Right lobe of liver (tissue), 6 donors: ENCODE measurements at regions of chr16 and their contacts with region 1.

Region 1: GRCh38 chr16:4556112-4556511 is at the start of gene C16orf96:
- DNase-seq: no peak
- ATAC-seq: peak in 2 of 4 donors; percentile 28 to 71
- H3K4me3 ChIP-seq: no peak within 1 kb of the TSS
- H3K27ac ChIP-seq: no peak within 1 kb of the TSS
- H3K4me1 ChIP-seq: no peaks in the 10 kb centered on the region
- H3K27me3 ChIP-seq: no peaks in the 10 kb centered on the region
- CTCF ChIP-seq: no peak
- POLR2A ChIP-seq: no peak
- total RNA-seq, gene C16orf96: 0.06 to 0.24 (median 0.16) TPM in 5 of 6 experiments, not detected in the other

Region 2: DNA sequence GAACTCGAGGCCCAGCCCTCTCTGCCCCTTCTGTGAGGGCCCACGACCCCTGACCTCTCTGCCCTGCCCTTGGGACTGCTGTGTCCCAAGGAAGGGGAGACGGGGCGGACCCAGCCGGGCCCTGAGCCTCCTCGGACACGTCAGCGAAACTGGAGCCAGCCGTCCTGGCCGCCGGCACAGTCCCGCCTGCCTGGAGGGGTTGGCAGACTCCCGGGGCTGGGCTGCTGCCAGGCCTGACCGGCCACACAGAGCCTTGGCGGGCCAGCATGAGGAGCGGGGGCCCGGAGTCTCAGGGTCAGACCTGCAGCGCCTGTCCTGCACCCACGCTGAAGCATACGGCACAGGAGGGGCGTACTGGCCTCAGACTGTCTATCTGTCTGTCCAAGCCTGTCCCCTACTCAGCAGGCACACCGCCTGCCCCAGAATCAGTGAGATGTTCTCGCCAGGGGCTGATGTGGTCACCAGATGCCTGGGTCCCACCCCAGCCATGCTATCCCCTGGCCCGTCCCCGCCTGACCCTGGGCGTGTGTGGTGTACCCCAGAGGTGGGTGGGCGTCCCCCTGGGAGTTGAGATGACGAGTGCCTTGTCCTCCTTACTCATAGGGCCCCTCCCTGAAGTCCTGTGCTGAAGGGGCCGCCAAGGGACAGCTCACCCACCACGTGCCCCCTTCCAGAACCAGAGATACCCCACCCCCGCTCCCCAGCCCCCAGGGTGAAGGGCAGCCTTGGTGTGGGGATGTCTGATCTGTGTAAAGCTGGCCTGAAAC is 179.8 kb before region 1 on chr16:
- intact Hi-C with region 1: no loop called
- DNase-seq: peak; percentile 92 to 97 (median 95)
- ATAC-seq: peak; percentile 46 to 61 (median 50)
- H3K4me3 ChIP-seq: peak overlapping the region in 2 of 3 donors; percentile 29 to 31
- H3K27ac ChIP-seq: peak overlapping the region; percentile 76 to 97 (median 91)
- H3K4me1 ChIP-seq: peaks cover 0 to 76% (median 25%) of the 10 kb centered on the region in 4 donors
- H3K27me3 ChIP-seq: no peaks in the 10 kb centered on the region
- CTCF ChIP-seq: no peak
- POLR2A ChIP-seq: no peak

Region 3: DNA sequence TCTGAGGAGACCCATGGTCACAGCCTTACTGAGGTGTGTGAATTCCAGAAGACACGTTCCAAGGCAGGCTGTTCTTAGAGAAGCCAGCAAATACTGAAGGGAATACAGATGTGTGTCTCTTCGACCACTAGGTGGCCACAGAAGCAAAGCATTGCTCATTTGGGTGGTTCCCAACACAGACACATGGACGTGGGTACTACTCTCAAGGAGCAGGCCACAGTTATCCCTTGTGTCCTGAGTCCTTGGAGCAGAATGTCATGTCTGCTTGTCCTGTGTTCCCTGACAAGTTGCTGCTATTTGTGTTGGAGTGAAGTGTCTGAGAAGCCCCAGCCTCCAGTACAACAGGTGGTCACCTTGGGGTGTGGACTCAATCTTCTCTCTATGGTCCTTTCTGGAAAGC is 49.7 kb before region 1 on chr16:
- intact Hi-C with region 1: loop called in 1 of 2 experiments (anchors 10 kb)
- DNase-seq: peak in 1 of 3 donors; percentile 63
- ATAC-seq: peak; percentile 78 to 87 (median 78)
- H3K4me3 ChIP-seq: no peak overlapping the region
- H3K27ac ChIP-seq: no peak overlapping the region
- H3K4me1 ChIP-seq: peaks cover 0 to 10% (median 0%) of the 10 kb centered on the region in 4 donors
- H3K27me3 ChIP-seq: no peaks in the 10 kb centered on the region
- CTCF ChIP-seq: peak; percentile 73 to 83 (median 79)
- POLR2A ChIP-seq: no peak